CD8-positive, alpha-beta T cell (primary cell): ENCODE measurements at regions of chr19 and their contacts with region 1.

Region 1: GRCh38 chr19:12400633-12401502 is at the start of gene ZNF799:
- DNase-seq: peak; percentile 38 to 88 (median 81)
- ATAC-seq: peak; percentile 91
- H3K4me3 ChIP-seq: peak within 1 kb of the TSS; percentile 94 to 96
- H3K4me3 Mint-ChIP-seq: peak within 1 kb of the TSS; percentile 90
- H3K27ac ChIP-seq: peak within 1 kb of the TSS; percentile 37 to 58
- H3K27ac Mint-ChIP-seq: peak within 1 kb of the TSS; percentile 81
- H3K4me1 ChIP-seq: peaks cover 4% of the 10 kb centered on the region
- H3K4me1 Mint-ChIP-seq: peaks cover 27% of the 10 kb centered on the region
- H3K27me3 ChIP-seq: no peaks in the 10 kb centered on the region
- H3K27me3 Mint-ChIP-seq: no peaks in the 10 kb centered on the region
- CTCF ChIP-seq: no peak
- total RNA-seq, gene ZNF799: 1.1 TPM

Region 2: DNA sequence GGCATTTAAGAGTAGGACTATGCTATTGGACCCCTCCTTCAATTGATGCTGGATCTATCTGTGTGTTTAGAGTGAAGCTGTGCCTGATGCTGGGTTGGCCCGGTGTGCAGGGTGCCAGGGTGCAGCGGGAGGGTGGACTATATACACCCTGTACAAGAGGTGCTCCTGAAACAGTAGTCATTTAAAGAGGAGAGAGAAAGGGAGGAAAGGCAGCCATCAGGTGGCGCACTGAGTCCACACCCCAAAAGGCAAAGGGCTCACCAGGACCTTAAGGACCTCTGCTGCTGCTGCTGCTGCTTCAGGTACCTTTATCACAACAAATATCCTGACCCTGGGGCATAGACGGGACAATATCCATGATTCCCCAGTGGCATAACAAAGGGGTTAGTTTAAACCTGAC is 198.6 kb before region 1 on chr19:
- CTCF ChIA-PET with region 1: no interaction called
- POLR2A ChIA-PET with region 1: no interaction called
- intact Hi-C with region 1: loop called in 1 of 2 experiments (anchors 2 kb)
- DNase-seq: peak; percentile 28 to 77 (median 62)
- ATAC-seq: peak; percentile 83
- H3K4me3 ChIP-seq: no peak overlapping the region
- H3K4me3 Mint-ChIP-seq: no peak overlapping the region
- H3K27ac ChIP-seq: no peak overlapping the region
- H3K27ac Mint-ChIP-seq: no peak overlapping the region
- H3K4me1 ChIP-seq: peaks cover 8% of the 10 kb centered on the region
- H3K4me1 Mint-ChIP-seq: peaks cover 18% of the 10 kb centered on the region
- H3K27me3 ChIP-seq: no peaks in the 10 kb centered on the region
- H3K27me3 Mint-ChIP-seq: no peaks in the 10 kb centered on the region
- CTCF ChIP-seq: peak; percentile 36

Region 3: GRCh38 chr19:12365236-12366162 is 35.4 kb before region 1 on chr19 and contains the start of gene ZNF442:
- CTCF ChIA-PET with region 1: no interaction called
- POLR2A ChIA-PET with region 1: interaction called, 7 read pairs
- intact Hi-C with region 1: loop called (anchors 1 to 2 kb)
- DNase-seq: peak; percentile 54 to 91 (median 85)
- ATAC-seq: peak; percentile 98
- H3K4me3 ChIP-seq: peak within 1 kb of the TSS; percentile 64 to 65
- H3K4me3 Mint-ChIP-seq: peak within 1 kb of the TSS; percentile 97
- H3K27ac ChIP-seq: peak within 1 kb of the TSS in 1 of 2 experiments; percentile 34
- H3K27ac Mint-ChIP-seq: peak within 1 kb of the TSS; percentile 84
- H3K4me1 ChIP-seq: peaks cover 13% of the 10 kb centered on the region
- H3K4me1 Mint-ChIP-seq: peaks cover 24% of the 10 kb centered on the region
- H3K27me3 ChIP-seq: peaks cover 0 to 2% of the 10 kb centered on the region in 2 experiments
- H3K27me3 Mint-ChIP-seq: no peaks in the 10 kb centered on the region
- CTCF ChIP-seq: no peak
- total RNA-seq, gene ZNF442: 1.00 to 1.0 TPM

Region 4: DNA sequence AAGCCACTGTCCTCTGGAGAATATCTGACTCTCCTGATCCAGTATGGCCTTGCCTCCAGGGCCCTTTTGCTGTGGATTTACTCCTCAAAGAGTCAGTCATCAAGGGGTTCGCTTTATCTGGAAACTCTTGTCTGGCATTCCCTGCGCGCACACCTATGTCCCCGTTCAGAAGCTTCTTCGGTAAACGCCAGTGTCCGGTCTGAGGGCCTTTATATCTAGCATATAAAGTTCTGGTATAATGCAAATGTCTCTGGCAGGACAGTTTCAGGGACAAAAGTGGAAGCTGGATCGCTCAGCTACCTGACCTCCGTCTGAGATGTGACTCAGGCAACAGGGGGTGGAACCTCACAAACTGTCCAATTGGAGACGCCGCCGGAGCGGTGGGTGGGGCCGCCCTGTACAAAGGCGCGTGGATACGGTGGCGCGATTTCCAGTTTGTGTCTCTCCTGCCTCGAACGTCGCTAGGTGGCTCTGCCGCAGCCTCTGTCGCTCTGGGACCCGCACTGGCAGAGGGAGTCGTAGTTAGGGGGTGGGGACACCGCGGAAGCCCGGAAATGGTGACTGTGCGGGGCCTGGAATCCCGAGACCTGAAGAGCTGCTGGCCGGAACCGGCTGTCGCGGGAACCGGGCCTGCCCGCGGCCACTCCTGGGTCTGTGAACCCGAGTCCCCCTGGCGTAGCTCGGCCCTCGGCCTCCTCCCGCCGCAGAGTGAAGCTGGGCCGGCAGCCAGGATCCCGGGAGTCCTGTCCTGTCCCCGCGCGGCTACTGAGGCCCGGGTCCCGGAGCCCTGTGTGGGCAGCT is 94.3 kb after region 1 on chr19:
- CTCF ChIA-PET with region 1: no interaction called
- POLR2A ChIA-PET with region 1: no interaction called
- intact Hi-C with region 1: loop called in 1 of 2 experiments (anchors 2 kb)
- DNase-seq: peak; percentile 81 to 96 (median 93)
- ATAC-seq: peak; percentile 99
- H3K4me3 ChIP-seq: peak overlapping the region; percentile 53 to 64
- H3K4me3 Mint-ChIP-seq: peak overlapping the region; percentile 91
- H3K27ac ChIP-seq: peak overlapping the region; percentile 68 to 79
- H3K27ac Mint-ChIP-seq: peak overlapping the region; percentile 94
- H3K4me1 ChIP-seq: peaks cover 8% of the 10 kb centered on the region
- H3K4me1 Mint-ChIP-seq: peaks cover 18% of the 10 kb centered on the region
- H3K27me3 ChIP-seq: no peaks in the 10 kb centered on the region
- H3K27me3 Mint-ChIP-seq: no peaks in the 10 kb centered on the region
- CTCF ChIP-seq: peak; percentile 55